Activated CD4-positive, alpha-beta memory T cell treated with anti-CD3 and anti-CD28 coated beads, Interleukin-2, amount 10 ng/mL, durations not matched to agents 7 days and 5 days (primary cell): ENCODE measurements at regions of chr6 and their contacts with region 1.

Region 1: DNA sequence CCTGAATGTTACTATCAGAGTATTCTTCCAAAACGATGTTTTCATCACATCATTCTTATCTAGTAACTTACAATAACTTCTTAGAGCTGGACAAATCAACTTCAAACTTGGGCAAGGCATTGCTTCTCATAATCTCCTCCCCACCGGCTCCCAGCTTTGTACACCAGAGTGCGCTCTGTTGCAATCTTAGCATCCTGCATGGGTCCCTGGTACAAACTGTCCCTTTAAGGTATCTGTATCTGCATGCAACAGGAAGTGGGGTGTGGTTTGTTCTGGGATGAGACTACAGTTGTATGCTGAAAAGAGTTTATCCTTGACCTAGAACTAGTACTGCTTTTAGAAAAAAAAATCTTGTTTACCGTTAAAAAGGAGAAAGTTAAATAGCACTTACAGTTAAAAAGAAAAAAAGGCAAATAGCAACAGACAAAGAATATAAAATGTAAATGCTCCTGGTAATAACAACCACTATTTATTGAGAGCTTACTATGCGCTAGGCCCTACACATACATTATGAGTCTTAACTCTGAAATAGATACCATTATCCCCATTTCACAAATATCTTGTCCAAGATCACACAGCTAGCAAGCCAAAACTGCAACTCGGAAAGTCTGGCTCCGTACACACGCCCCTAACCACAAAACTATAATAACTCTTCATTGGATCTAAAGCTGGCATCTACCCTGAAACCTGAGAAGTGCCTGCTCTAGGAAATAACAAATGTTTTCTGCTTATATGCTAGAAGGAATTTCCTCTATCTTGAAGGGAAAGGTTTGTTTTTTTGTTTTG is 9.8 kb upstream of the HECA start:
- DNase-seq: peak; percentile 87
- H3K4me3 Mint-ChIP-seq: peak overlapping the region; percentile 49
- H3K27ac Mint-ChIP-seq: peak overlapping the region; percentile 95
- H3K4me1 Mint-ChIP-seq: peaks cover 41% of the 10 kb centered on the region
- H3K27me3 Mint-ChIP-seq: no peaks in the 10 kb centered on the region

Region 2: DNA sequence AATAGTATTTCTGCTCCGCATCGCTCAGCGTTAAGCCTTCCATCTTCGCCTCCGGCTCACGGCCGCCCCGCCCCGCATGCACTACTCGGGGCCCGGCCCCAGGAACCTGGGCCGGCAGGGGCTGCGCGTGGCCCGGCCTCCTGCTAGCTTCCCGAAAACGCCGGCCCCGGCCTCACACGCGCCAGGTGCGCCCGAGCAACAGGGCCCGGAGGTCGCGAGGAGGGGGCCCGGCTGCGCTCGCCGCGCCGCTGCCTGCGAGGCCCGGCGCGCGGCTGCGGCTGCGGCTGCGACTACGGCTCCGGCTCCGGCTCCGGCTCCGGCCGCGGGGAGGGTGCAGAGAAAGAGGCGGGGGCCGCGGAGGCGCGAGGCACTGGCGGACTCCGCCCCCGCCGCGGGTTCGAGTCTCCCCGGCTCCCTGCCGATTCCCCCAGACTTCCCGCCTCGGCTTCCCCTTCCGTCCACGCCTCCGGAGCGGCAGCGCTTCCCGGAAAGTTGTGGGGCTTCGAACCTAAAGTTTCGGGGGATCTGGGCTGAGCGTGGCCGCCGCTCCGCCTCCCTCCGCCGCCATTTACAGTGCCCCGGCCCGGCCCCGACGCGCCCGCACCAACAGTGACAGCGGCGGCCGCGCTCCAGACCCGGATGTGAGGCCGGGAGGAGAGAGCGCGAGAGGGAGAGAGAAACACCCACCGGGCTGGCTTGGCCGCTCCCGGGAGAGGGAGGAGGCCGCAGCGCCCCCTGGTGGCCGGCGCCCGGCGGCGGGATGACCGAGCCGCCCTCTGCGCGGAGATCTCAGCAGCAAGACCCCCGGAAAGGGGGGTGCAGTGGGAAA is 137.2 kb before region 1 on chr6 and contains the start of gene REPS1:
- CTCF ChIA-PET with region 1: no interaction called
- POLR2A ChIA-PET with region 1: interaction called, 14 read pairs
- DNase-seq: peak; percentile 90
- H3K4me3 Mint-ChIP-seq: peak within 1 kb of the TSS; percentile 88
- H3K27ac Mint-ChIP-seq: peak within 1 kb of the TSS; percentile 88
- H3K4me1 Mint-ChIP-seq: peaks cover 7% of the 10 kb centered on the region
- H3K27me3 Mint-ChIP-seq: no peaks in the 10 kb centered on the region
- total RNA-seq, gene REPS1: 41.9 to 45.6 TPM

Region 3: DNA sequence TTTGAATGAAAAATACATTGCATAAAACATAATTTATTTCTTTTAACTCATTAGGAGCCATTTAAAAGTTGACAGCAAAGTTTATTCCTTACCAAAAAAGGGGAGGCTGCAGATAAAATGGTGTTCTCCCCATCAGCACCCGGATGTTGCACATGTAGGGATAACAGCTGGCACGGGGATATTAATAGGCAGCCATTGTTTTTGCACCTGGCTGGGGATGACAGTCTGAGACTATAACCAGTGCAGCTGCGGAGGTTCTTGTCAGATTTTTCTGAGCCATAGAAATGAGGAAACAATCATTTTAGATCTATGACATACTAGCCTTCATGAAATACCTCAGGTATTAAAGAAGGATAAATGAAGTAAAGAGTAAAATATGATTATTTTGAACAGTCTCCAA is 10.3 kb before region 1 on chr6:
- CTCF ChIA-PET with region 1: interaction called, 22 read pairs
- POLR2A ChIA-PET with region 1: interaction called, 23 read pairs
- DNase-seq: no peak
- H3K4me3 Mint-ChIP-seq: no peak overlapping the region
- H3K27ac Mint-ChIP-seq: no peak overlapping the region
- H3K4me1 Mint-ChIP-seq: peaks cover 50% of the 10 kb centered on the region
- H3K27me3 Mint-ChIP-seq: no peaks in the 10 kb centered on the region

Region 4: DNA sequence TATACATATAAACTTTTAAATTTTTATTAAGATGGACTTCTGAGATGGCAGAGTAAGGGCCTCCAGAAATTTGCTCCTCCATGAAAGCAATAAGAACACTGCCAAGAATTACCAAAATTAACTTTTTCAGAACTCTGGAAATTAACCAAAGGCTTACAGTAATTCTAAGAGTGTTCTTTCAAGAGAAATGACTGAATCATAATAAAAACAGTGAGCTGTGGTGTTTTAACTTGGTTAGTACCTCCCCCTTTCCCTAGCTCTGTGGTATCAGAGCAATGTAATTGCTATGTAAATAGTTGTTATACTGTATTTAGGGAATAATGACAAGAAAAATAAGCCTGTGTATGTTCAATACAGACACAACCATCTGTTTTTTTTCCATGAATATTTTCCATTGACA is 28.8 kb after region 1 on chr6:
- CTCF ChIA-PET with region 1: interaction called, 4 read pairs
- POLR2A ChIA-PET with region 1: interaction called, 13 read pairs
- DNase-seq: no peak
- H3K4me3 Mint-ChIP-seq: no peak overlapping the region
- H3K27ac Mint-ChIP-seq: peak overlapping the region; percentile 23
- H3K4me1 Mint-ChIP-seq: peaks cover 77% of the 10 kb centered on the region
- H3K27me3 Mint-ChIP-seq: no peaks in the 10 kb centered on the region

Region 5: GRCh38 chr6:139250296-139251044 is 125.4 kb after region 1 on chr6:
- CTCF ChIA-PET with region 1: interaction called, 14 read pairs
- POLR2A ChIA-PET with region 1: interaction called, 8 read pairs
- DNase-seq: peak; percentile 78
- H3K4me3 Mint-ChIP-seq: peak overlapping the region; percentile 70
- H3K27ac Mint-ChIP-seq: peak overlapping the region; percentile 93
- H3K4me1 Mint-ChIP-seq: peaks cover 44% of the 10 kb centered on the region
- H3K27me3 Mint-ChIP-seq: no peaks in the 10 kb centered on the region

Region 6: DNA sequence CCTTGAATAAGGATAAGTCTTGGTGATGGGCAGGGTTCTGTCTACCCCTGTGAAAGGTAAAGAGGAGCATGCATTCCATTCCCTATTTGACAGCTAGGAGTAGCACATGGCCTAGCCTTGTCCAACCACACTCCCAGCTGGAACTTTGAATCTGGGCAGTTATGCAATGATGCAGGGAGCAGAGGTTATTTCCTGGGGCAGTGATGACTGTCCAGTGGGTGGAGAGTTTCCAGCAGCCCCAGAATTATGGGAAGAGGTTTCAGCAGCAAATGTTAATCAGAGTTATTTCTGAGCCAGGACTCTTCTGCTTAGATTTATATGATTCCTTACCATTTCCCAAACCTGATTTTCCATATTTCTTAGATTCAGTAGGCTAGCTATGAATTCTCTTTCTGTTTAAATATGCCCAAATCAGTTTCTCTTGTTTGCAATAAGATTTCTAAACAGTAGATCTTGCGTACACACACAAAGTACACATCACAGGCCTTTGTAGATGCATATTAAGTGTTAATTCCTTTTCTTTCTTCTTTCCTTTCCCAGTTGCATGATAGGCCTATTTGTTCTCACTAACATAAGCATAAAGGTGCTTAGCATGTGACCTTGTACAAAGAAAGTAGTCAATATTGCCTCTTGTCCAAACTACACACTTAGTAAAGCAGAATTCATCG is 184.0 kb after region 1 on chr6:
- CTCF ChIA-PET with region 1: no interaction called
- POLR2A ChIA-PET with region 1: no interaction called
- DNase-seq: no peak
- H3K4me3 Mint-ChIP-seq: no peak overlapping the region
- H3K27ac Mint-ChIP-seq: no peak overlapping the region
- H3K4me1 Mint-ChIP-seq: peaks cover 6% of the 10 kb centered on the region
- H3K27me3 Mint-ChIP-seq: peaks cover 5% of the 10 kb centered on the region

Region 7: DNA sequence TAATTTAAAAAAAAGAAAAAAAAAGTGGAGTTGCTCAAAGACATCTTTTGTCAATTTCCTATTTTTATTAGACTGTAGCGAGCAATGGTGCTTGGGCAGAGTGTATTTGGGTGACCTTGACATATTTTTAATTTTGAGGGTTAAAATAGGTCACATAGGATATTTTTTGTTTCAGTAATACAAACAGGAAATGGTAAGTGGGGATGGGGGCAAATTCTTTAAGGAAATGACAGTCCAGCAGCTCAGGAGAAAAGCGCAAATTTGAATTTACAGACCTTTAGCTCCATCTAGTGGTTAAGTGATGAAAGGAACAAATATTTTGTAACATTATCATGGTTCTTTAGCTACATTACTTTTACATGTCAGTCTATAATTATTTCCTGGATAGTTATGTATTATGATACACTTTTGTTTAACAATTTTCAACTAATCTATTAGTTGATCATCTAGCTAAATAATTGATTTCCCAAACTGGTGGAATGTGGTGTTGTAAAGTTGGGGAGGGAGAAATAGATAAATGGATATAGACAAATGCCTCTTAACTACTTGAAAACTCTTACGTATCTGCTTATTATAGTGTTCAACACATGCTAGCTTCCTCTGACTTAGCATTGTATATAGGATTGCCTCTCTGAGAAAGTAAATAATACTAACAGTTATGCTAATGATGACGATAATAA is 239.4 kb after region 1 on chr6:
- CTCF ChIA-PET with region 1: interaction called, 42 read pairs
- POLR2A ChIA-PET with region 1: interaction called, 11 read pairs
- DNase-seq: no peak
- H3K4me3 Mint-ChIP-seq: no peak overlapping the region
- H3K27ac Mint-ChIP-seq: no peak overlapping the region
- H3K4me1 Mint-ChIP-seq: peaks cover 41% of the 10 kb centered on the region
- H3K27me3 Mint-ChIP-seq: no peaks in the 10 kb centered on the region